ENCODE measurements at regions of chr22 and their contacts with region 1.

Region 1: DNA sequence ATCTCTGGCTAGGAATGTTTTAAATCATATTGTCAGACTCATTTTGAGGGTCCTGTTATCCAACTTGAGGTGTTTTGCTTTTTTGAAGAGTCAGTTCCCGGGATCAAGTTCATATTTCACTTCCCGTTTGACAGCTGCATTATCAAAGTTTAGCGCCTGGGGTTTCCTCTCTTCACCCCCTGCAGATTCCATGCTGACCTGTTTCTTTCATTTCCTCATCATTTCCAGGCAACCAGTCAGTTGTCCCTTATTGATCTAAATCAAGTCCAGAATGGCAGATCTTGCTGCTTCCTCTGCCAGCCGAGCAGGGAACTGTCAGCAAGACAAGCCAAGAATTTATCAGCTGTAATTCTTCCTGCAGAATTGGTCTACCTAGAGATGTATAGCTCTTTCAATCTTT is 197.6 kb upstream of the SYN3 start:
- DNase-seq: no peak

Region 2: DNA sequence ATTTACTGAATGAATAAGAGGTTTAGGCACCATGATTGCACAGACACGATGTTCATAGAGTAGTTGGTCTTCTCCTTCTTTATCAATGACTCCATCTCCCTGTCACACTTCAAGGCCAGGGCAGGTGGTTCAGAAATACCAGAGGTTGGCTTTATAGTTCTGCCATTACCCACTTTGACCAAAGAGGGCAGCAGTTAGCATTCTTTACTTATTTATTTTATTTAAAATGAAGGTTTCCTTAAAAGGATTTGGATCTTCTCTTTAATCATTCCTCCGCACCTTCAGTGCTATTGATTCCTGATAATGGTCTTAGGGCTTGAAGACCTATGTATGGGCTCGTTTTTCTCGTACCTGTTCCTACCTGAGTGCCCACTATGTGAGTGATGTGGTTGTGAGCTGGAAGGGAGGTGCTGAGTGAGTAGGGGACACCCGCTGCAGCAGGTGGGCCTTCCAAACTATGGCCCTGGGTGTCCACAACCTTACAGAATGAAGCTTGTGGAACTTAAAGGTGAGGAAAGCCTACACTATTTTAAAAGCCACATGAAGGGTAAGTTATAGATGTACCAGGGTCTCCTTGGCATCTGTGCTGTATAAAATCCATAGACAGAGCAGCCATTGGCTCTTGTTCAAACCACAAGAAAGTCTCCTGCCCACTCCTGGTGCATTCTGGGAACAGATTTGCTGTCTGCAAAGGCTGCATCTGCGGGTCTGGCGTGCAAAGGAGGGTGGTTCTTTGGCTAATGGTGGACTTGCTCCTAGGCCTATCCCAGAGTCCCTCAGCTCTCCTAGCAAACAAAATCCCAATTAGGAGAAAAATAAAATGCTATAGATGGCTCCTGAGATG is 419.3 kb before region 1 on chr22:
- intact Hi-C with region 1: loop called in 1 of 2 experiments (anchors 10 kb)
- DNase-seq: no peak

Measured in posterior vena cava (tissue), 2 donors.